ENCODE measurements at regions of chr14 and their contacts with region 1.

Region 1: GRCh38 chr14:49620182-49621113 is at the starts of genes MGAT2 and RPL36AL:
- DNase-seq: peak; percentile 98
- H3K4me3 ChIP-seq: peak within 1 kb of the TSS; percentile 93
- H3K27ac ChIP-seq: peak within 1 kb of the TSS; percentile 95
- H3K27me3 ChIP-seq: no peaks in the 10 kb centered on the region
- CTCF ChIP-seq: peak; percentile 53
- polyA plus RNA-seq, gene MGAT2: 47.5 and 54.7 TPM in 2 replicates
- polyA plus RNA-seq, gene RPL36AL: 272 and 295 TPM in 2 replicates

Region 2: DNA sequence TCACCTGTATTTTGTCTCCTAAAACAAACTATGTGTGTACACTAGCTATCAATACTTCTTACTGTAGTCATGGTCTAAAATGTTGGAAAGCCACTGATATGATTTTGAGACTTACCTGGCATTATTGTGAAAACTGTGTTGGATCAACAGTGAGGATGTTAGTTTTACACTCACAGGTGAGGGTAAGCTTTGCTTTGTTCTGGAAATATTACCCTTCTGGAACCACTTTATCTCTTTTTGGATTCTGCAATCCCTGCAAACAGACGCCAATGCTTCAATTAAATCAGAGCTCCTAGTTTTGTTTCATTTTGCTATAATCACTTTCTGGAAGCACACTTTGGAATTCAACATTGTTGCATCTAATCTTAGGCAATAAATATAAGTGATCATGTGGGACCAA is 257.5 kb before region 1 on chr14:
- CTCF ChIA-PET with region 1: no interaction called
- POLR2A ChIA-PET with region 1: no interaction called
- DNase-seq: no peak
- H3K4me3 ChIP-seq: no peak overlapping the region
- H3K27ac ChIP-seq: no peak overlapping the region
- H3K27me3 ChIP-seq: no peaks in the 10 kb centered on the region
- CTCF ChIP-seq: no peak

Region 3: DNA sequence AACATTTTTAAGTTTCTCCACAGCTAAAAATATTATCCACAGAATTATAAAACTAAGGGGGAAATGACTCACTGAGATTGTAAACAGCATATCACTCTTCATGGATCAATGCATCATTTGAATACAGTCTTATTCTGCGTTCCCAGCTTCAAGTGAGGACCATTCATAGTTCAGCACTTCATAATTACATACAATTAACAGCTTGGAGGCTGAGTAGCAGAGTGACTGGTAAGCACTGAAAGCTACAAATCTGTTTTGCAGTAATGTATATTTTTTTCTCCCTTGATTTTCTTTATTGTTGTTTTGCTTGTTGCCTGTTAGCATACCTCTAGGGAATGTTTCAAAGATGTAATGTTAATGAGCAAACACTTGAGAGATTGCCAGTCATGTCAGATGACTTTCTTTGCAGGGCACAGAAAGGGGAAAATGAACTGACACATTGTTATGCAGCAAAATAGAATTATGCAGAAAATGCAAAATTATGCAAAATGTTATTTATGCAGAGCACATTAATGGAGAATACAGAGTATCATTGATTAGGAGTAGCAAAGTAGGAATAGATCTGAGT is 172.8 kb before region 1 on chr14:
- CTCF ChIA-PET with region 1: no interaction called
- POLR2A ChIA-PET with region 1: no interaction called
- DNase-seq: no peak
- H3K4me3 ChIP-seq: no peak overlapping the region
- H3K27ac ChIP-seq: no peak overlapping the region
- H3K27me3 ChIP-seq: no peaks in the 10 kb centered on the region
- CTCF ChIP-seq: no peak

Region 4: DNA sequence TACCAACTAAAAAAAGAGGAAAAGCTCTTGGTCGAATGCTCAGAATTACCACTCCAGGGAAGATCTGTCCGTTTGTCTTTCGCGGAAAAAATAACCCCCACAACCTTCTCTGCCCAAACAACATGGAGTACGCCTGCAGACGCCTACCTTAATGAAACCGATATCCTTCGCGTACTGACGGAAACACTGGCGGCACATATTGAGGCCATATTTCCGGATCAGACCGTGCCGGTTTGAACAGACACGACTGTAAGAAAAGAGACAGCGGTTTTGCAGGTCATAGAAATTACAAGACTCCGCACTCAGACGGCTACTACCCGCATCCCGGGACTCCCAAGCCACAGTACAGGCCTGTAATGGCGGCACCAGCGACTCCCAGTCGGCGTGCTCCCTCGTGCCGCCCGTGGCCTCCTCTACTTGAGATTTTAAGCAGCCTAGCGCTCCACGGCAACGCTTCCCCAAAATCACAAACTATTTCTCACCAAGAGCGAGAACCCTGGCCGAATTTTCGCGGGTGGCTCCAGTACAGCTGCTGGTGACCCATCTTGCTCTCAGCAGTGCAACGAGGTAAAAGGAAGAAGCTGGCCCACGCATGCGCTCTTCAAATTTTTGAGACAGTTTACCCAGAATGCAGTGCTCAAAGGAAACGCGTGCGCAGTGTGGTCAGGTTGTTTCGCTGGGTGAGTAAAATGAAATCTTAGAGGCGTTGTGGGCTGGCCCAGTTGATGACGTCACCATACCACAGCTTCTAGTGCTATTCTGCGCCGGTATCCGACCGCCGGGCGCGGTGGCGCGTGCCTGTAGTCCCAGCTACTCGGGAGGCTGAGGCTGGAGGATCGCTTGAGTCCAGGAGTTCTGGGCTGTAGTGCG is 34.4 kb before region 1 on chr14 and contains the start of gene RPS29:
- CTCF ChIA-PET with region 1: interaction called, 9 read pairs
- POLR2A ChIA-PET with region 1: interaction called, 21 read pairs
- DNase-seq: peak; percentile 99
- H3K4me3 ChIP-seq: peak within 1 kb of the TSS; percentile 95
- H3K27ac ChIP-seq: peak within 1 kb of the TSS; percentile 67
- H3K27me3 ChIP-seq: no peaks in the 10 kb centered on the region
- CTCF ChIP-seq: no peak
- polyA plus RNA-seq, gene RPS29: 3,597 and 3,950 TPM in 2 replicates

Region 5: GRCh38 chr14:49598485-49599300 is 21.8 kb before region 1 on chr14 and contains the start of gene LRR1:
- CTCF ChIA-PET with region 1: no interaction called
- POLR2A ChIA-PET with region 1: interaction called, 26 read pairs
- DNase-seq: peak; percentile 34
- H3K4me3 ChIP-seq: peak within 1 kb of the TSS; percentile 95
- H3K27ac ChIP-seq: peak within 1 kb of the TSS; percentile 99
- H3K27me3 ChIP-seq: no peaks in the 10 kb centered on the region
- CTCF ChIP-seq: no peak
- polyA plus RNA-seq, gene LRR1: 9.8 and 12.8 TPM in 2 replicates

Region 6: DNA sequence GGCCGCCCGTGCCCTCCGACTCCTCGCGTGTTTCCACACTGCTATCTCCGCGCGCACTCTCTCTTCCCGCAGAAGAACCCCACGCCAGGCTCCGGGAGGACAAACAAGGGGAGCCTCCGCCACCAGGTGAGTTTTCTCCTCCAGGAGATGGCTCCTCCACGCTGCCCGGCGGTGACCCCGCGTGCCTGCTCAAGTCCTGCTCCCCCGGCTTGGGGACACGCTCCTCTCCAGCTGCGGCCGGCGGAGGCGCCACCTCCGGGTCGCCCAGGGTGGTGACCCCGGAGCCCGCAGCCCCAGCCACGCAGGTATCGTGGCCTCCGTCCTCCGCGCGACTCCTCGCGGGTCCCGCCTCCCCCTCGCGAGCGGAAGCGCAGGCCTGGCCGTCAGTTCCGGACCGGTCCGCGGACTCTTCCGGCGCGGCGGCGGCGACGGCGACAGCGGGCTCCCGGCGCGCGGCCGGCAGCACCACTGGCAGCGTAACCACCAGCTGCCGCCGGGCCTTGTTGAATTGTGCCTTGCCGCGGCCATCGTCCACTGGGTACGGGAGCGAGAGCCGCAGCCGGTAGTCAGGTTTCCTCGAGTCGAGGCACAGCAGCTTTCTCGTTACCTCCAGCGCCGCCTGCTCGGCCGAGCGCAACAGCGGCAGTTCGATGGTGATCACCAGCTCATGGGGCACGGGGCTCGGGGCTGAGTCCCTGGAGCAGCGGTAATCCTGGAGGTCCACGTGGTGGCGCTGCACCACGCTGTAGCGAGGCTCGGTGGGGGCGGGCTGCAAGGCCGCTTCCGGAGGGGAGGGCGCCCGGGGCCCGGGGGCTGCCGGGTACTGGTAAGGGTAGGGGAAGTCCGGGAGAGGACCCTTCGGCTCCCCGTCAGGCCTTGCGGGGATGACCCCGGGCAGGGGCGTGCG is 13.4 kb after region 1 on chr14:
- CTCF ChIA-PET with region 1: interaction called, 19 read pairs
- POLR2A ChIA-PET with region 1: interaction called, 22 read pairs
- DNase-seq: peak; percentile 88
- H3K4me3 ChIP-seq: peak overlapping the region; percentile 94
- H3K27ac ChIP-seq: peak overlapping the region; percentile 92
- H3K27me3 ChIP-seq: no peaks in the 10 kb centered on the region
- CTCF ChIP-seq: peak; percentile 73

Region 7: DNA sequence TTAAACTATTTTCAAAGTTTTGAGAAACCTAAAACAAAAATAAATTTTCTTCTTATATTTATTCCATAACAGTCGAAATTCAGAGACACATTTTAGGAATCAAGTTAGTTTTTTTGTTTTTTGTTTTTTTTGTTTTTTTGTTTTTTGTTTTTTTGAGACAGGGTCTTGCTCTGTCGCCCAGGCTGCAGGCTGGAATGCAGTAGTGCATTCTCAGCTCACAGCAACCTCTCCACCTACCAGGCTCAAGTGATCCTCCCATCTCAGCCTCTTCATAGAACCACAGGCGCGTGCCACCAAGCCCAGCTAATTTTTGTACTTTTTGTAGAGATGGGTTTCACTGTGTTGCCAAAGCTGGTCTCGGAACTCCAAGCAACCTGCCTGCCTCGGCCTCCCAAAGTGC is 33.1 kb after region 1 on chr14:
- CTCF ChIA-PET with region 1: no interaction called
- POLR2A ChIA-PET with region 1: no interaction called
- DNase-seq: no peak
- H3K4me3 ChIP-seq: no peak overlapping the region
- H3K27ac ChIP-seq: no peak overlapping the region
- H3K27me3 ChIP-seq: no peaks in the 10 kb centered on the region
- CTCF ChIP-seq: no peak

Region 8: GRCh38 chr14:49767562-49768300 is 147.3 kb after region 1 on chr14 and contains the start of gene KLHDC2:
- CTCF ChIA-PET with region 1: no interaction called
- POLR2A ChIA-PET with region 1: interaction called, 16 read pairs
- DNase-seq: peak; percentile 67
- H3K4me3 ChIP-seq: peak within 1 kb of the TSS; percentile 97
- H3K27ac ChIP-seq: peak within 1 kb of the TSS; percentile 96
- H3K27me3 ChIP-seq: no peaks in the 10 kb centered on the region
- CTCF ChIP-seq: no peak
- polyA plus RNA-seq, gene KLHDC2: 59.8 and 81.6 TPM in 2 replicates